A673 (cell line): ENCODE measurements at regions of chr14 and their contacts with region 1.

Region 1: DNA sequence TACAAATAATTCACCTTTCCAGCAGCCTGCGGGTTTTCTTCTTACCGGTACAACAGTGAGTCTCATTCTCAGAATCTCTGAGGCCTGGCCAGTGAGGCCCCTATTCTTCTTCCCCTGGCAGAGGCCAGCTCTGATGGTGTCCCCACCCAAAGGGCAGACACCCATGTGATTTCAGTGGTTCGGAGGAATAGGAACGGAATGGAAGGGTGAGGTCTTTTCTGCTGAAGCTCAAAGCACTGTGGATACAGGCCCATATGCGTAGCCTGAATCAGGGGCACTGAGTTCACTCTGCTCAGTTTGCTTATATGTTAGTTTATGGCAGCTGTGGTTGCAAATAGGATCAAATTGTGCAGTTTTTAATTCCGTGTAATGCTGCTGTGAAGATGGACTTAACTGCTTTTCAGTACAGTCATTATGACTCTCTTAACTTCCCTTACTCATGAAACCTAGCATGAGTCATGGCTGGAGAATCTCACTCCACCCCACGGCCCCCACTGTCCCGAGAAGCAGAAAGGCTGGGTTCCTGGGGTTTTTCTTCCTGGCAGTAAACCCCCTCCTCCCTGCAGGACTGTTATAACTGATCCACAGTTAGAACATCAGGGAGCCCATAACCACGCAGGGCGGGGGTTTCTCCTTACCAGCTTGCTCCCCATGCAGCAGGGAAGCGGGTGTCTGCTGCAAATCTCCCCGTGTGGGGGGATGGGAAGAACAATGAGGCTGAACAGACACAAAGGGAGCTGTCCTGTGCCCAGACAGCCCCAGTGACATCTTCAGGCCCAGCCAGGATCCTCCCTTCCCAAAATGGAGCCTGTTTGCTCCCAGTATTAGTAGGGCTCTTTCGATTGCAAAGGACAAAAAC is 122.7 kb downstream of the SLC38A6 start:
- DNase-seq: peak; percentile 98
- H3K4me3 ChIP-seq: no peak overlapping the region
- H3K27ac ChIP-seq: peak overlapping the region; percentile 96
- H3K4me1 ChIP-seq: peaks cover 74% of the 10 kb centered on the region
- H3K27me3 ChIP-seq: no peaks in the 10 kb centered on the region
- CTCF ChIP-seq: no peak

Region 2: GRCh38 chr14:60628892-60629291 is 474.8 kb before region 1 on chr14:
- CTCF ChIA-PET with region 1: no interaction called
- POLR2A ChIA-PET with region 1: no interaction called
- intact Hi-C with region 1: loop called (anchors 5 kb)
- DNase-seq: no peak
- H3K4me3 ChIP-seq: no peak overlapping the region
- H3K27ac ChIP-seq: no peak overlapping the region
- H3K4me1 ChIP-seq: peaks cover 14% of the 10 kb centered on the region
- H3K27me3 ChIP-seq: no peaks in the 10 kb centered on the region
- CTCF ChIP-seq: no peak

Region 3: GRCh38 chr14:60980811-60981632 is 122.7 kb before region 1 on chr14 and contains the starts of genes SLC38A6 and TRMT5:
- CTCF ChIA-PET with region 1: no interaction called
- POLR2A ChIA-PET with region 1: no interaction called
- intact Hi-C with region 1: loop called (anchors 2 kb)
- DNase-seq: peak; percentile 97
- H3K4me3 ChIP-seq: peak within 1 kb of the TSS; percentile 84
- H3K27ac ChIP-seq: peak within 1 kb of the TSS; percentile 94
- H3K4me1 ChIP-seq: peaks cover 26% of the 10 kb centered on the region
- H3K27me3 ChIP-seq: no peaks in the 10 kb centered on the region
- CTCF ChIP-seq: no peak
- total RNA-seq, gene SLC38A6: 25.8 and 28.0 TPM in 2 replicates
- total RNA-seq, gene TRMT5: 21.9 and 26.2 TPM in 2 replicates

Region 4: DNA sequence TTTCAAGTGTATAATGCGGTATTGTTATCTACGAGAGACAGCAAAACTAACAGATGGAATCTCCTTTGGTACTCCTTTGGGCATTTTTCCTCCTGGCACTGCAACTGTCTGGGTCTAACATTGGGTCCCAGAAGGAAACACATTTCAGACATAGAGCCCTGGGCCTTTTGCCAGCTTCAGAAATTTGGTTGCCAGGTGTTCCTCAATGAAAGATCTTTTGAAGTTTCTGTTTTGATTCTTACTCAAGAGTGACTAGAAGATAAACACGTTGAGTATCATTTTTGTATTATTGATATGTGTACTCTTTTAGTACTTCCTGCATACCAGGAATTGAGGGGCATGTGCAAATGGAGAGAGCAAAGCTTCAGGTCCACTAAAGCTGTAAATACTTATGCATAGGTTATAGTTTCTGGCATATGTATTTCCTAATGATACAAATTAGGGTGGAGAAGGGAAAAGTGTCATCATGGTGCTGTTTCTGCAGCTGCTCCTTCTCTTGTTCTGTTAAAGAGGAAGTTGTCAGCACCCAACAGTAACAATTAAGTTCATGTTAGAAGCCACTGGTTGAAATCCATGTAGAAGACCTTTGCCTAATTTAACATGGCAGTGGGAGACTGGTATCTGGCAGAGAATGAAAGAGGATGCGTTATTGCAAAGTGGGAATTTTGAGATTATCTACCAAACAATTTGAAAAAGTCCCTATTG is 69.1 kb before region 1 on chr14:
- CTCF ChIA-PET with region 1: no interaction called
- POLR2A ChIA-PET with region 1: no interaction called
- intact Hi-C with region 1: loop called (anchors 5 kb)
- DNase-seq: no peak
- H3K4me3 ChIP-seq: no peak overlapping the region
- H3K27ac ChIP-seq: peak overlapping the region; percentile 12
- H3K4me1 ChIP-seq: peaks cover 54% of the 10 kb centered on the region
- H3K27me3 ChIP-seq: no peaks in the 10 kb centered on the region
- CTCF ChIP-seq: no peak

Region 5: GRCh38 chr14:61147831-61148549 is 44.3 kb after region 1 on chr14:
- CTCF ChIA-PET with region 1: no interaction called
- POLR2A ChIA-PET with region 1: no interaction called
- intact Hi-C with region 1: loop called (anchors 5 kb)
- DNase-seq: no peak
- H3K4me3 ChIP-seq: no peak overlapping the region
- H3K27ac ChIP-seq: no peak overlapping the region
- H3K4me1 ChIP-seq: peaks cover 44% of the 10 kb centered on the region
- H3K27me3 ChIP-seq: no peaks in the 10 kb centered on the region
- CTCF ChIP-seq: no peak

Region 6: DNA sequence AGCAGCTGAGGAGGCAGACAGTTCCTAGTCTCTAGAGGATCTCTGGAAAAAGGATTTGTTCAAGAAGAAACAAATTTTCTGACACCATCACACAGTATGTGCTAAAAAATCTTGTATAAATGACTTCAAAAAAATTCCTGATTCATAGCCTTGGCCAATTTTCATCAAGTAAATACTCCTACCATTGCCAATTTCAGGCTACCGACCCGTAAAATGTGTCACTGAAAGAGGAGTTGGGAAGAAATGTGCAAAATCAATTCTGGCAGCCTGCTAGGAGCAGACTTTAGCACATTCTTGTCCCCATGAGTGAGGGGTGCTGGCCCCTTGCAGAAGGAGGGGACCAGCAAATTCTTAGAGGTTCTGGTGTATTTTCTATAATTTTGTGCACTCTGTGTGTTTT is 68.0 kb after region 1 on chr14:
- CTCF ChIA-PET with region 1: no interaction called
- POLR2A ChIA-PET with region 1: no interaction called
- intact Hi-C with region 1: no loop called
- DNase-seq: no peak
- H3K4me3 ChIP-seq: no peak overlapping the region
- H3K27ac ChIP-seq: no peak overlapping the region
- H3K4me1 ChIP-seq: peaks cover 33% of the 10 kb centered on the region
- H3K27me3 ChIP-seq: no peaks in the 10 kb centered on the region
- CTCF ChIP-seq: no peak

Region 7: DNA sequence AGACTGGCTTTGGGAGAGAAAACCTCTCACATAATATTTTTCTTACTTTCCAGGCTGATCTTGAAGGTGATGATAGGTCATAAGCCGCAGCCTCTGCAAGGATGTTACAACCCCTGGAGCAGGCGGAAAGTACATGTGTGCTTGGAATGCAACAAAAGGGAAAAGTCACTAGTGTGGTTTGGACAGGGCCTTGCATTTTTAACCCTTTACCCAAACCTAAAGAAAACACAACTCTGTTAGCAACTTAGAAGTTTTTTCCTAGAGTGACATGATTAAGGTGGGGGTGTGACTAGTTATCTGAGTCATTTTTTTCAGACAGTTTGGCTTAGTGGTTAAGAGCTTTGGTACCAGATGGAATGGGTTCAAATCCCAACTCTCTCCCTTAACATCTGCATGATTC is 80.4 kb after region 1 on chr14:
- CTCF ChIA-PET with region 1: no interaction called
- POLR2A ChIA-PET with region 1: no interaction called
- intact Hi-C with region 1: loop called (anchors 5 kb)
- DNase-seq: peak; percentile 34
- H3K4me3 ChIP-seq: no peak overlapping the region
- H3K27ac ChIP-seq: peak overlapping the region; percentile 70
- H3K4me1 ChIP-seq: peaks cover 54% of the 10 kb centered on the region
- H3K27me3 ChIP-seq: no peaks in the 10 kb centered on the region
- CTCF ChIP-seq: no peak